Heart left ventricle (tissue), 16 donors: ENCODE measurements at regions of chr11 and their contacts with region 1.

Region 1: GRCh38 chr11:100316952-100317351 is 370.1 kb upstream of the ARHGAP42 start:
- DNase-seq: no peak
- ATAC-seq: no peak
- H3K4me3 ChIP-seq: no peak overlapping the region
- H3K27ac ChIP-seq: no peak overlapping the region
- H3K4me1 ChIP-seq: no peaks in the 10 kb centered on the region
- H3K27me3 ChIP-seq: no peaks in the 10 kb centered on the region
- CTCF ChIP-seq: no peak
- POLR2A ChIP-seq: no peak

Region 2: GRCh38 chr11:100066399-100066798 is 250.6 kb before region 1 on chr11:
- intact Hi-C with region 1: no loop called
- DNase-seq: no peak
- ATAC-seq: no peak
- H3K4me3 ChIP-seq: no peak overlapping the region
- H3K27ac ChIP-seq: no peak overlapping the region
- H3K4me1 ChIP-seq: no peaks in the 10 kb centered on the region
- H3K27me3 ChIP-seq: no peaks in the 10 kb centered on the region
- CTCF ChIP-seq: no peak
- POLR2A ChIP-seq: no peak

Region 3: GRCh38 chr11:100383357-100383865 is 66.5 kb after region 1 on chr11:
- intact Hi-C with region 1: loop called in 1 of 10 experiments (anchors 10 kb)
- DNase-seq: no peak
- ATAC-seq: peak in 1 of 4 donors; percentile 22
- H3K4me3 ChIP-seq: no peak overlapping the region
- H3K27ac ChIP-seq: no peak overlapping the region
- H3K4me1 ChIP-seq: no peaks in the 10 kb centered on the region
- H3K27me3 ChIP-seq: no peaks in the 10 kb centered on the region
- CTCF ChIP-seq: no peak
- POLR2A ChIP-seq: no peak